ENCODE measurements at regions of chrX and their contacts with region 1.

Region 1: GRCh38 chrX:14029425-14030173 is at the start of gene GEMIN8:
- DNase-seq: peak; percentile 88
- ATAC-seq: peak; percentile 73
- H3K4me3 ChIP-seq: peak within 1 kb of the TSS; percentile 77
- H3K27ac ChIP-seq: peak within 1 kb of the TSS; percentile 98
- H3K4me1 ChIP-seq: peaks cover 46% of the 10 kb centered on the region
- H3K27me3 ChIP-seq: no peaks in the 10 kb centered on the region
- CTCF ChIP-seq: no peak
- total RNA-seq, gene GEMIN8: 6.3 and 8.3 TPM in 2 replicates

Region 2: GRCh38 chrX:13499736-13500135 is 529.9 kb before region 1 on chrX:
- CTCF ChIA-PET with region 1: no interaction called
- POLR2A ChIA-PET with region 1: no interaction called
- intact Hi-C with region 1: no loop called
- DNase-seq: no peak
- ATAC-seq: no peak
- H3K4me3 ChIP-seq: no peak overlapping the region
- H3K27ac ChIP-seq: no peak overlapping the region
- H3K4me1 ChIP-seq: no peaks in the 10 kb centered on the region; the same call in 1 of the 2 replicates
- H3K27me3 ChIP-seq: no peaks in the 10 kb centered on the region
- CTCF ChIP-seq: no peak

Region 3: DNA sequence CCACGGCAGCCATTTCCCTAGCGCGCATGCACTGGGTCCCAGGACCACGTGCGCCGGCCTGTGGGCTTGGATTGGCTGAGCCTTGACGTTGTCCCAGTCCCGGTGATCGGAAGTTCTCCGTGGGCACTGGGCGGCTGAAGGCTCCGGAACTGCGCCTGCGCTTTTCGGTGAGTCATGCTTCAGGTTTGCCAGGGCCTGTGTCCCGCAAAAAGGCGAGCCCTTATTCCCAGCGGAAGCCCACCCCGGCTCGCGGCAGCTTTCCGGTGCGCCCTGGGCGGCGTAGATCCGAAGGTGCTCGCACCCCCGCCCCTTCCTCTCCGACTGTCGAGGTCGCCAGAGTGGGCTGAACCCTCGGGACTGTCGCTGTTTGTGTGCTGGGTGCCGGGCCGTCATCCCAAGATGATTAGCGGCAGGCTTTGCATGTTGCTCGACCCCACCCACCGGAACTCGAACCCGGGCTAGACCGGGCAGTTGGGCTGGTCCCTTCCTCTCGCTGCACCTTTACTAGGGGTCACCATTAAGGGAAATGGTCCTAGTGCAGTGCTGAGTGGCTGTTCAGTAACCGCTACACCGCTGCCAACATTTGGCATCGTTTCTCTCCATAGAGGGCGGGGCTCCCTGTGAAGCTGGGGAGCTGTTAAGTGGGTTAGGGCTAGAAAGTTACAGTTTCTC is 376.4 kb before region 1 on chrX and contains the start of gene TCEANC:
- CTCF ChIA-PET with region 1: no interaction called
- POLR2A ChIA-PET with region 1: no interaction called
- intact Hi-C with region 1: loop called (anchors 1 kb)
- DNase-seq: peak; percentile 97
- ATAC-seq: peak; percentile 93
- H3K4me3 ChIP-seq: peak within 1 kb of the TSS; percentile 82
- H3K27ac ChIP-seq: peak within 1 kb of the TSS; percentile 98
- H3K4me1 ChIP-seq: peaks cover 28% of the 10 kb centered on the region
- H3K27me3 ChIP-seq: no peaks in the 10 kb centered on the region
- CTCF ChIP-seq: no peak
- total RNA-seq, gene TCEANC: 0.62 and 0.69 TPM in 2 replicates

Region 4: DNA sequence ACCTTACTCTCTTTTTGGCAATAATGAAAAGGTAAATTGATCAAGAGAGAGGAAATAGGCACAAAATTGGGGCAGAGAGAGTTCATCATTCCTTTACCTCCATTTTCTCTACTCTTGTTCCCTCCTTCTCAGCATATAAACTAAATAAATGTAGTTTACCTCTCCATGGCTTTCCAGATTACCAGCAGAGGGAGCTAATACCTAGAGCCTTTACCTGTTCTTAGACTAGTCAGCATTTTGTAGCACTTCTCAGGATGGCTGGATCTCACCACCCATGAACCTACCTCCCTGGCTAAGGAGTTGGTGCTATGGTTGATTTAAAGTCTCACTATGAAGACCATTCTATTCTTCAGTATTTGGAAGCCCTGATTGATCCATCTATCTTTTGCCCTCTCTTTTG is 279.4 kb before region 1 on chrX:
- CTCF ChIA-PET with region 1: no interaction called
- POLR2A ChIA-PET with region 1: no interaction called
- intact Hi-C with region 1: loop called (anchors 1 kb)
- DNase-seq: peak; percentile 78
- ATAC-seq: peak; percentile 71
- H3K4me3 ChIP-seq: no peak overlapping the region
- H3K27ac ChIP-seq: 0 out of 2 replicates have a peak overlapping the region, but pooled peaks have one; percentile 98
- H3K4me1 ChIP-seq: peaks cover 26% of the 10 kb centered on the region
- H3K27me3 ChIP-seq: no peaks in the 10 kb centered on the region
- CTCF ChIP-seq: peak; percentile 73

Region 5: DNA sequence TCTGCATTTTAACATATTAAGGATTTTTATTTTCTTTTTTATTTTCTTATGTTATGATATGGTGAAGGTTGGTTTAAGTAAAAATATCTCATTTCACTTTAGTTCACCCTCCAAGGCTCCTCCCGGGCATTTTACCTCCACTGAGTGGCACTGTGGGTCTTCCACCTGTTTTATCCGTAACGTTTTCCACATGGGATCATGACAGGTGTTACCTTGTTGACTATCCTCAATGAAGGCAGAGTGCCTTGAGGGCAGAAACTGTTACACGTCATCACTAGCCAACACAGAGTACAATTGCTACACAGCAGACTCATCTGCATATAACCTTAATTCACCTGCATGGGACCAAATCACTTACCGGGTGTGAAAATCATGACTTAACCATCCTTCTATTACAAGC is 105.8 kb before region 1 on chrX:
- CTCF ChIA-PET with region 1: no interaction called
- POLR2A ChIA-PET with region 1: no interaction called
- intact Hi-C with region 1: loop called (anchors 2 kb)
- DNase-seq: peak; percentile 30
- ATAC-seq: no peak; the same call in 1 of the 2 replicates
- H3K4me3 ChIP-seq: no peak overlapping the region
- H3K27ac ChIP-seq: no peak overlapping the region
- H3K4me1 ChIP-seq: no peaks in the 10 kb centered on the region
- H3K27me3 ChIP-seq: no peaks in the 10 kb centered on the region
- CTCF ChIP-seq: peak; percentile 38; the same call in 1 of the 2 replicates

Region 6: DNA sequence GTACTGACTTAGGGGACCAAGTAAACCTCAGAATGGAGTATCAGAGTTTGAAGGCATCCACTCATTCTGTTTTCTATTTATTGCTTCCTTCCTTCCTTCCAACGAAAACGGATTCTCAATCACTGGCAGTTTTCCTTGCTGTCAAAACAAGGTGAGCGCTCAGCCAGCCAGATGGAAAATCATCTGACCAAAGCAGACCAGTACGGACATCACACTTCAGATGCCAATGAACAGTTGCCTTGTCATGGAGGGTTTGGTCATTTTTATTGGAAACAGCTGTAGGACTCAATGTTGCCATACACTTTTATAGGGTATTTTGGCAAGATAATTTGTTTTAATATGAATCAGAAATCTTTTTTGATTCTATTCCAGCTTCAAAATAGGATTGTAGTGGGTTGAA is 16.5 kb before region 1 on chrX:
- CTCF ChIA-PET with region 1: no interaction called
- POLR2A ChIA-PET with region 1: no interaction called
- intact Hi-C with region 1: loop called (anchors 1 kb)
- DNase-seq: peak; percentile 43
- ATAC-seq: peak; percentile 90
- H3K4me3 ChIP-seq: no peak overlapping the region
- H3K27ac ChIP-seq: peak overlapping the region; percentile 15
- H3K4me1 ChIP-seq: peaks cover 15% of the 10 kb centered on the region
- H3K27me3 ChIP-seq: no peaks in the 10 kb centered on the region
- CTCF ChIP-seq: no peak